ENCODE measurements at regions of chr1 and their contacts with region 1.

Region 1: GRCh38 chr1:155084722-155085503 is 6.3 kb downstream of the EFNA3 start:
- DNase-seq: peak; percentile 94
- H3K4me3 Mint-ChIP-seq: peak overlapping the region; percentile 92
- H3K27ac Mint-ChIP-seq: peak overlapping the region; percentile 84
- H3K4me1 Mint-ChIP-seq: peaks cover 35% of the 10 kb centered on the region
- H3K27me3 Mint-ChIP-seq: peaks cover 31% of the 10 kb centered on the region

Region 2: DNA sequence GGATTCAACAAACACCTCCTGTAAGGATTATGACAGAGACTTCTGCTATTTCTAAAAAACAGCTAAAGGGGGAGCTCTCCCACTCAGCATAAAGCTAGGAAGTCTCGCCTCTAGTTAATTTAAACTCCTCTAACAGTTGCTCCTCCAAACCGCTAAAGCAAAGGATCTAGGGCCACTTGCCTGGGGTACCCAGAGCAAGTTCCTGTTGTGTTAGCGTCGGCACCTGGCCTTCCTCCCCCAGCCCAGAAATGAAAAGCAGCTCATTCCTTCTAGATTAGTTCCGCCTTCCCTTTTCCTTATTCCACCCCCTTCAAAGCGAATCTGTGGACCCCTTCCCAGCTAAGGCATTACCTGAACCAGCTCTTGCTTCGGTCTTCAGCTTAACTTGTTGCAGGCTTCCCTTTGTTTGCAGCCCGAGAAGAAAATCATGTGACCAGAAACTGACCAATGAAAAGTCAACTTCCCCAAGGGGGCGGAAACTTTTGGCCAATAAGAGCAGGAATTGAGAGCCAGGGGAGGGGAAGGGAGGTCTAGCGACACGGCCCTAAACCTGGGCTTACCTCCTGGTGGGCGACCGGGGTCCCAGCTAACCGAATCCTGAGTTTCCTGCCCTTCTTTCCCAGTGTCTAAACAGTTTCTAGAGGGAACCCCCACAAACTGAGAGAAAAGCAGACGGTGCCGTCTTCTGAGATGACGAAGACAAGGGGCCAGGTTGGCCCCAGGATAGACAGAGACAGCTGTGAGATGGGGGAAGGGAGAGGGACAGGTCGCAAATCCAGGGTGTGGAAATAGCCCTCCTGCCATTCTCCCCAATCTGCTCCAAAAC is 129.0 kb before region 1 on chr1 and contains the start of gene PBXIP1:
- CTCF ChIA-PET with region 1: interaction called, 12 read pairs
- POLR2A ChIA-PET with region 1: interaction called, 3 read pairs
- intact Hi-C with region 1: loop called (anchors 1 kb)
- DNase-seq: peak; percentile 89
- H3K4me3 Mint-ChIP-seq: peak within 1 kb of the TSS; percentile 92
- H3K27ac Mint-ChIP-seq: peak within 1 kb of the TSS; percentile 97
- H3K4me1 Mint-ChIP-seq: peaks cover 75% of the 10 kb centered on the region
- H3K27me3 Mint-ChIP-seq: no peaks in the 10 kb centered on the region
- total RNA-seq, gene PBXIP1: 55.9 to 57.3 TPM

Region 3: DNA sequence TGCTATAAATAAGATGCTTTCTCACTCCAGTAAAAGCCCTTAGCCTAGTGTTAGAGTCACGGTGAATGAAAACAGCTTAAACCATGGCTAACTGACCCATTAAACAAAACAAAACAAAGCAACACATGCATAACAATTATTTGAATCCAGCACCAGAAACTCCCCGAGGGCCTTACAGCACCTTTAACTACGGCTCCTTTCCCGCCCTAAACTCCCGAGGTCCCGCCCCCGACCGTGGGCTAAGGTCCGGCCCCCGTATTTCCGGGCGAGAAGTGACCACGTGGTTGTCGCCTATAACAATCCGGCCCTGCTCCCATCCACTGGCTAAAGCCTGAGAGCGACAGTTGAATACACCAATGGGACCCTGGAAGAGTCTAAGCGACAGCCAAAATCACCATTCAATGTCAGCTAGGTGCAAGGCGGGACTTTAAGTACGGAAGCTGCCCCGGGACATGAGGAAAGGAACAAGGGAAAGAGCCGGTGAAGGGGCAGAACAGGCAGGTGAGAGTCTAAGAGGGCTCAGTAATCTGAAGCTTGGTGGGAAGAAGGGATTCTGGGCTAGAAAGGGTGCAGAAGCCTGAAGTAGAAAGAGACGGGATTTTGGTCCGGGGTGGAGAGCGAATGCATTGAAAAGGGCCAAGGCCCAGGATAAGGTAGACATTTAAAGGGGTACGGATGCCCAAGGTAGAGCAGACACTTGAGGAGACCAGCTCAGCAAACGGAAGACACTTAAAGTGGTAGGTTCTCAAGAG is 101.8 kb before region 1 on chr1 and contains the start of gene FLAD1:
- CTCF ChIA-PET with region 1: interaction called, 9 read pairs
- POLR2A ChIA-PET with region 1: no interaction called
- intact Hi-C with region 1: loop called (anchors 1 kb)
- DNase-seq: peak; percentile 98
- H3K4me3 Mint-ChIP-seq: no peak within 1 kb of the TSS
- H3K27ac Mint-ChIP-seq: no peak within 1 kb of the TSS
- H3K4me1 Mint-ChIP-seq: peaks cover 14% of the 10 kb centered on the region
- H3K27me3 Mint-ChIP-seq: no peaks in the 10 kb centered on the region
- total RNA-seq, gene FLAD1: 45.4 to 49.4 TPM

Region 4: GRCh38 chr1:155044812-155045690 is 39.9 kb before region 1 on chr1:
- CTCF ChIA-PET with region 1: interaction called, 56 read pairs
- POLR2A ChIA-PET with region 1: interaction called, 4 read pairs
- intact Hi-C with region 1: loop called (anchors 2 kb)
- DNase-seq: peak; percentile 76
- H3K4me3 Mint-ChIP-seq: no peak overlapping the region
- H3K27ac Mint-ChIP-seq: no peak overlapping the region
- H3K4me1 Mint-ChIP-seq: peaks cover 8% of the 10 kb centered on the region
- H3K27me3 Mint-ChIP-seq: no peaks in the 10 kb centered on the region

Region 5: DNA sequence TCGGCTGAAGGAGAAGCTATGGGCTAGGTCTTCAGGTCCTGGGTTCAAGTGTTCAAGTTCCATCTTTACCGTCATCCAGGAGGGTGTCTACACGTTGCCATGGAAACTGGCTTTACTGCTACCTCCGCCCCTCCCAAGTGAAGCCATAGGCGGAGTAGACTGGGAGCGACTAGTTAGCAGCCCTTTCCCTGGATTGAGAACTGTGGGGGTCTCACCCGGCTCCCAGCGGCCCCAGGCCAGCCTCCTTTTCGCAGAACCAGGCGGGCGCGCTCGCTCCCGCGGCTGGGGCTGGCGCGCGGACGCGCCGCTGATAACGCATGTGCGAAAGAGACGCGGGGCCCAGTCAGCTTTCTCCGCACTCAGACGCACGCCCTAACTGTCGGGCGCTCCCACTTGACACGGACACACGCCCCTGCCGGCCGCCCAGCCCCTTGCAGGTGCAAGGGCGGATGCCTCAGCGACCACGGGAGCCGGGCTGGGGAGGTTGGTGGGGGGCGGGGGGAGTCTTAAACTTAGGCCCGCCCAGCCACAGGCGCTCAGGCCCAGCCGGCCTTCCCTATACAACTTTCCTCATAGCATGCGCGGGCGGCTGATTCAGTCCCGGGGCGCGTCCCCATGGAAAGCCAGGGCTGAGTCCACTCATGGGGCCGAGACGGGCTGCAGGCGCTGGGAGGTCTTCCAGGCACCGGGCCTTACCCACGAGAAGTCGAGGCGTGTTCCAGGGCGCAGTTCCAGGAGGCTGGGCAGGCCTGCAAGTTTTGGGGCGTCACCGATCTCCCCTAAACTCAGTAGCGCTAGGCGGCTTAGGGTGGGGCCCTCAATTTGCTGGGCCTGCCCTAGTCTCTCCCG is 14.0 kb before region 1 on chr1:
- CTCF ChIA-PET with region 1: interaction called, 125 read pairs
- POLR2A ChIA-PET with region 1: interaction called, 3 read pairs
- intact Hi-C with region 1: no loop called
- DNase-seq: peak; percentile 85
- H3K4me3 Mint-ChIP-seq: peak overlapping the region; percentile 32
- H3K27ac Mint-ChIP-seq: no peak overlapping the region
- H3K4me1 Mint-ChIP-seq: peaks cover 16% of the 10 kb centered on the region
- H3K27me3 Mint-ChIP-seq: no peaks in the 10 kb centered on the region

Region 6: GRCh38 chr1:155117617-155118016 is 32.7 kb after region 1 on chr1:
- CTCF ChIA-PET with region 1: no interaction called
- POLR2A ChIA-PET with region 1: no interaction called
- intact Hi-C with region 1: no loop called
- DNase-seq: no peak
- H3K4me3 Mint-ChIP-seq: no peak overlapping the region
- H3K27ac Mint-ChIP-seq: no peak overlapping the region
- H3K4me1 Mint-ChIP-seq: no peaks in the 10 kb centered on the region
- H3K27me3 Mint-ChIP-seq: no peaks in the 10 kb centered on the region

Region 7: GRCh38 chr1:155167166-155168104 is 82.5 kb after region 1 on chr1:
- CTCF ChIA-PET with region 1: interaction called, 274 read pairs
- POLR2A ChIA-PET with region 1: interaction called, 3 read pairs
- intact Hi-C with region 1: loop called (anchors 2 kb)
- DNase-seq: peak; percentile 92
- H3K4me3 Mint-ChIP-seq: peak overlapping the region; percentile 49
- H3K27ac Mint-ChIP-seq: no peak overlapping the region
- H3K4me1 Mint-ChIP-seq: peaks cover 19% of the 10 kb centered on the region
- H3K27me3 Mint-ChIP-seq: no peaks in the 10 kb centered on the region

Region 8: DNA sequence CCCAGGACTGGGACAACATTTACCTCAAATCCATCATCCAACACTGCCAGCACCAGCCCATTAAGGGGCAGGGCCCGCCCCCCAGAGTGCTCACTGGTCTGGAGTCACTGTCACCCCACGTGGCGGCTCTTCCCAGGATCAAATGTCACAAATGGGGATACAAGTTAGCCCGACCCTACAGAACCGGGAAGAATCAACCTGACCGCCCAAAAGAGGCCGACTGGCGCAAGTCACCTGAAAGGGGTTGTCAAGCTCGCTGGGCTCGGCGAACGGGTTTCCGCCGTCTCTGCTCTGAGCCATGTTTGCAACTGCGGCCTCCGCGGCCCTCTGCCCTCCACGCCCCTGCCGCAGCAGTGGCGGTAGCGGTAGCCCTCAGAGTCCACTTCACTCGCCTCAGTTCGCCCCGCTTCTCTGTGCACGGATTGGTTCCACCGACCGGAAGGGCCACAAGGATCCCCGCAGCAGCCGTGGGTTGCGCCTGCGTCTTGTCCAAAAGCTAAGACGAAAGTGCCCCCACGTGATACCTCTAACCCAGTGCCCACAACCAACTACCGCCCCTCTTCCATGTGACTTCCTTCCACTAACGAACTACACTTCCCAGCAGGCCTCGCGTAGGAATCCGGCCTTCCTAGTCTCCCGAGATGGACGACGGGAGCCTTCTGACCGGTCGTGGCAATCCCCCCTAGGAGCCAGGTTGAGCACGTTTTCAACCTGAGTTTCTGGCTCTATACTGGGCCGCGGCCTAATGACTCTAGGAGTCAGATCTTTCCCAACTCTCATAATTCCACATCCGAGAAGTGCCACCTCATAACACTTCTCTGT is 177.2 kb after region 1 on chr1 and contains the start of gene SCAMP3:
- CTCF ChIA-PET with region 1: no interaction called
- POLR2A ChIA-PET with region 1: no interaction called
- intact Hi-C with region 1: no loop called
- DNase-seq: peak; percentile 94
- H3K4me3 Mint-ChIP-seq: peak within 1 kb of the TSS; percentile 98
- H3K27ac Mint-ChIP-seq: peak within 1 kb of the TSS; percentile 88
- H3K4me1 Mint-ChIP-seq: peaks cover 24% of the 10 kb centered on the region
- H3K27me3 Mint-ChIP-seq: no peaks in the 10 kb centered on the region
- total RNA-seq, gene SCAMP3: 89.6 to 91.7 TPM

Measured in activated CD4-positive, alpha-beta memory T cell treated with anti-CD3 and anti-CD28 coated beads for 36 hours (primary cell).